ENCODE measurements at regions of chr11 and their contacts with region 1.

Region 1: GRCh38 chr11:61392981-61393595 is 701 bp downstream of the TMEM216 start:
- DNase-seq: peak; percentile 37
- H3K4me3 Mint-ChIP-seq: peak overlapping the region; percentile 89
- H3K27ac Mint-ChIP-seq: peak overlapping the region; percentile 81
- H3K4me1 Mint-ChIP-seq: peaks cover 17% of the 10 kb centered on the region
- H3K27me3 Mint-ChIP-seq: no peaks in the 10 kb centered on the region

Region 2: DNA sequence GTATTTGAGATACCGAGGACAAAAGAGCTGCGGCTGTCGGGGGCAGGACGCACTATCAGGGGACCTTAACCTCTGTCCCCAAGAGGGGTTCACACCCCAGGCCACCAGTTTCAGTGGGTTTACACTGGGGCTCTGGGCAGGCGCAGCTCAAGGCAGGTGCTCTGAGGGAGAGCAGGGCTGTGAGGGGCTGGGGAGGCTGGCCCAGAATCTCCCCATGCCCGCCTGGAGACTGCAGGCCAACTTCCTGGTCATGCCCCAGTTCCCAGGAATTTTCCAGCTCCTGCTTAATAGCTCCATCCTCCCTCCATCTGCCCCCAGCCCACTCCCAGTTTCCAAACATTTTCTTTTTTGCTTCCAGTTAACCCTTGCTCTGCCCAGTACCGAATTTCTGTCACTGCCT is 197.4 kb before region 1 on chr11:
- CTCF ChIA-PET with region 1: no interaction called
- intact Hi-C with region 1: no loop called
- DNase-seq: no peak
- H3K4me3 Mint-ChIP-seq: no peak overlapping the region
- H3K27ac Mint-ChIP-seq: no peak overlapping the region
- H3K4me1 Mint-ChIP-seq: no peaks in the 10 kb centered on the region
- H3K27me3 Mint-ChIP-seq: no peaks in the 10 kb centered on the region

Region 3: DNA sequence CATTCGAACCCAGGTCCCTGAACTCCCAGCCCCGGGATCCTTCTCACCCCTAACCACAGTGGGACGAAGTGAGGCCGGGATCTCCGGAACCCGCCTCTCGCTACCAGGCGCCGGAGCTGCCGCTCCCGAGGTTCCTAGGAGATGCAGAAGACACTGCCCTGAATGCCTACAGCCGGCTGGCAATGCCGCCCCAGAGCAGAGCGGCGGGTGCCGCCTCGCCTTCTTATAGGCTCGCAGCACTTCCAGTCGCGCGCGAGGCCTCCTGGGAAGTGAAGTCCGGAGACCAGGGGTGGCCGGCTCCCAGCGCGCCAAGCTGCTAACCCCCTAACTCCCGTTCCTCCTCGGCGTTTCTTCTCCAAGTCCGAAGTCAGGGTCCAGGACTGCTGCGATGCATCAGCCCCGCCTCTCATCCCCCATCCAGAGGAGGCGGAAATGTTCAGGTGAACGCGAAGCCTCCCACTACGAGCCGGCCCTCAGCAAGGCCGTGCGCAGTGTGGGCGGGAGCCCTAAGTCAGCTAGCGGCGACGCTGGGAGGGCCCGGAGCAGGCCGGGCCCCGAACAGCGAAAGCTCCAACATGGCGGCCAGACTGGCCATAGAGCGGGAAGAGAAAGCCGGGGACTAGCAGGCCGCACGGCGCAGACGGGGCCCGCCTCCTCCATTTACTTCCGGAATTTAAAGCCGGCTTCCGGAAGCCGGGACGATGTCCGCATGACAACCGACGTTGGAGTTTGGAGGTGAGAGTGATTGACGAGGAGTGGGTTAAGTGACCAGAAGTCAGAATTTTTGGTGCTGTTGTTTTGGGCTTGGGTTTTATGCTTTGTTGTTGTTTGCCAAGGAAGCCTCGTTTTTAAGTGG is 31.2 kb before region 1 on chr11 and contains the starts of genes CYB561A3 and TMEM138:
- CTCF ChIA-PET with region 1: interaction called, 4 read pairs
- intact Hi-C with region 1: loop called (anchors 2 kb)
- DNase-seq: peak; percentile 94
- H3K4me3 Mint-ChIP-seq: peak within 1 kb of the TSS; percentile 100
- H3K27ac Mint-ChIP-seq: peak within 1 kb of the TSS; percentile 96
- H3K4me1 Mint-ChIP-seq: peaks cover 42% of the 10 kb centered on the region
- H3K27me3 Mint-ChIP-seq: no peaks in the 10 kb centered on the region
- total RNA-seq, gene CYB561A3: 31.7 to 31.8 TPM
- total RNA-seq, gene TMEM138: 35.6 to 41.4 TPM

Measured in activated naive CD4-positive, alpha-beta T cell treated with anti-CD3 and anti-CD28 coated beads for 36 hours (primary cell).